PC-9 (cell line): ENCODE measurements at regions of chr1 and their contacts with region 1.

Region 1: DNA sequence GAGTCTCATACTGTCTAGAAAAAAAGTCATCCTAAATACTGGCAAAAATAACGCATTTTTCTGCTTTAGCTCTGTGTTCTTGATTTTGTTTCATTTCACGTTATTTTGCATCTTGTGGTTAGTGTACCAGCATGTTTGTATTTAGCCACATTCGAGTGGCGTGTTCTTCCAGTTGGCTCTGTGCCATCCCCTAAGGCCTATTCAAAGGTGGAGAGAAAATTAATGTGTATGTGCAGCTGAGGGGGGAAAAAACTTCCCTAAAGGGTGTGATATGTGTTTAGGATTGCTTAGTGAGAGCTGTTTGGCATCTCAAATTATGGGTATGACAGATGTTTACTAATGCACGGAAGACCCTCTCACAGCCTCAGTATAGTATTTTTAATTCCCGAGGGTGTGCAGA is 12.1 kb downstream of the DNAJC16 start:
- DNase-seq: no peak
- H3K4me3 ChIP-seq: no peak overlapping the region
- H3K27ac ChIP-seq: no peak overlapping the region
- H3K4me1 ChIP-seq: no peaks in the 10 kb centered on the region
- H3K27me3 ChIP-seq: no peaks in the 10 kb centered on the region
- CTCF ChIP-seq: no peak

Region 2: GRCh38 chr1:15436881-15437442 is 101.8 kb before region 1 on chr1:
- CTCF ChIA-PET with region 1: no interaction called
- POLR2A ChIA-PET with region 1: interaction called, 12 read pairs
- intact Hi-C with region 1: no loop called
- DNase-seq: no peak
- H3K4me3 ChIP-seq: no peak overlapping the region
- H3K27ac ChIP-seq: no peak overlapping the region
- H3K4me1 ChIP-seq: no peaks in the 10 kb centered on the region
- H3K27me3 ChIP-seq: no peaks in the 10 kb centered on the region
- CTCF ChIP-seq: no peak